A549 (cell line): ENCODE measurements at regions of chr12 and their contacts with region 1.

Region 1: GRCh38 chr12:53267999-53268647 is at the start of gene ESPL1:
- DNase-seq: peak; percentile 82 to 92
- ATAC-seq: peak; percentile 92 to 94
- H3K4me3 ChIP-seq: peak within 1 kb of the TSS; percentile 65
- H3K27ac ChIP-seq: peak within 1 kb of the TSS; percentile 75 to 90
- H3K4me1 ChIP-seq: peaks cover 12% of the 10 kb centered on the region
- CTCF ChIP-seq: peak; percentile 21; the same call in 1 of the 3 replicates
- EP300 ChIP-seq: no peak
- POLR2A ChIP-seq: no peak
- RAD21 ChIP-seq: peak; percentile 41 to 47; a peak in 3 of 5 replicates
- polyA plus RNA-seq, gene ESPL1: 10.0 and 11.8 TPM in 2 replicates

Region 2: GRCh38 chr12:53190108-53190729 is 77.9 kb before region 1 on chr12:
- CTCF ChIA-PET with region 1: no interaction called
- POLR2A ChIA-PET with region 1: no interaction called
- DNase-seq: peak; percentile 73 to 87
- ATAC-seq: peak; percentile 87 to 90
- H3K4me3 ChIP-seq: no peak overlapping the region
- H3K27ac ChIP-seq: peak overlapping the region; percentile 33 to 44; a peak in 3 of 6 replicates
- H3K4me1 ChIP-seq: peaks cover 15% of the 10 kb centered on the region; the same call in 2 of the 3 replicates
- CTCF ChIP-seq: peak; percentile 78
- EP300 ChIP-seq: no peak
- POLR2A ChIP-seq: no peak
- RAD21 ChIP-seq: peak; percentile 65 to 66; a peak in 4 of 5 replicates

Region 3: DNA sequence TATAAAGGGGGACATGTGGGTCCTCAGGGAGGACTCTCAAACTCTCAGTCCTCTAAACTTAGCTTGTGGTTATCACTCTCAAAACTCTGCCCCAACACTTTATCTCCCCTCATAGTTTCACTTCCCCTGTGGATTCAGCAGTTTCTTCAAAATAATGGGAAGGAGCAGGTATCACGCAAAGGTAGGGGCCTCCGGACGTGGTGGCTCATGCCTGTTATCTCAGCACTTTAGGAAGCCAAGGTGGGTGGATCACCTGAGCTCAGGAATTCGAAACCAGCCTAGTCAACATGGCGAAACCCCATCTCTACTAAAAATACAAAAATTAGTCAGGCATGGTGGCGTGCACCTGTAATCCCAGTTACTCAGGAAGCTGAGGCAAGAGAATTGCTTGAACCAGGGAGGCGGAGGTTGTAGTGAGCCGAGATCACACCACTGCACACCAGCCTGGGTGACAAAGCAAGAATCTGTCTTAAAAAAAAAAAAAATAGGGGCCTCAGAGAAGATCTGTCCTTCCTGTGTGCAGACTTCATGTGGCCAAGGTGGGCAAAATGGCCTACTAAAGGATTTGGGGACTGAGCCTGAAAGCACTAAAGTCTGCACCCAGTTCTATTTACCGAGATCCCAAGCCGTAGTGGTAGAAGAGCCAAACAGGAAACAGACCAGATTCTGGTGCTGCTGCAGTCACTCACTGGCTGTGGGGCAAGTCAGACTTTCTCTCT is 67.5 kb before region 1 on chr12:
- CTCF ChIA-PET with region 1: interaction called, 216 read pairs
- POLR2A ChIA-PET with region 1: no interaction called
- DNase-seq: no peak
- ATAC-seq: no peak
- H3K4me3 ChIP-seq: no peak overlapping the region
- H3K27ac ChIP-seq: no peak overlapping the region
- H3K4me1 ChIP-seq: peaks cover 21% of the 10 kb centered on the region
- CTCF ChIP-seq: no peak
- EP300 ChIP-seq: no peak
- POLR2A ChIP-seq: no peak
- RAD21 ChIP-seq: no peak

Region 4: GRCh38 chr12:53251477-53252348 is 16.4 kb before region 1 on chr12:
- CTCF ChIA-PET with region 1: interaction called, 35 read pairs
- POLR2A ChIA-PET with region 1: interaction called, 4 read pairs
- DNase-seq: peak; percentile 83 to 87
- ATAC-seq: peak; percentile 90 to 92
- H3K4me3 ChIP-seq: peak overlapping the region; percentile 90
- H3K27ac ChIP-seq: peak overlapping the region; percentile 91 to 94
- H3K4me1 ChIP-seq: peaks cover 16% of the 10 kb centered on the region
- CTCF ChIP-seq: peak; percentile 47
- EP300 ChIP-seq: no peak
- POLR2A ChIP-seq: peak; percentile 92
- RAD21 ChIP-seq: peak; percentile 64 to 69

Region 5: DNA sequence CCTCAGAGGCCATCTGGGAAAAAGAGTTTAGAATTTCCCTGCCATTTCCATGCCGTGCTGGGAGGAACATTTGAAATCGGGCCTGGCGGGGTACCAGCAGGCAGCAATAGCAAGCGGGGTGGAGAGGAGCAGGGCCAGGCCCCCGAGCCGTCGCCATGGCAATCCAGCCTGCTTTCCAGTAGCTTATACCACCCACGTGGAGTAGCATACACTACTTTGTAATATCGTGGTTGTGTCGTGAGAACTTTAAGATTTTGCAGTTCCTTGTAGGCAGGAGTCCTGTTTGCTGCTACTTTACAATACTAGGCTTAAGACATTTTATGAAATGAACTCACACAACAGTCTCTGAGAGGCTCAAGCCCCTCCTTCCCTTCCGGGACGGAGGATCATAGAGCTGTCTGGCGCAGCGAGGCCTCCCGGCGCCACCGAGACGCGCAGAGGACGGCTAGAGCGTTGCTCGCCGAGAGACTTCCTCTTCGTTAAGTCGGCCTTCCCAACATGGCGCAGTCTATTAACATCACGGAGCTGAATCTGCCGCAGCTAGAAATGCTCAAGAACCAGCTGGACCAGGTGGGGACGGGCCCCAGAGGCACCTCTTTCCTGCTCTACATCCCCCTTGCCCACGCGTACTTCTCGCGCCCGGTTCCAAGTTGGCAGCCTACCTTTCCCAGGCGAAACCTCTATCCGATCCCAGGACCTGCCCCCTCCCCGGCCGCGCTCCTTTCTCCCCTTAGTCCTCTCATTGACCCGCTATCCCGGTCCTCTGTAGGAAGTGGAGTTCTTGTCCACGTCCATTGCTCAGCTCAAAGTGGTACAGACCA is 27.2 kb after region 1 on chr12 and contains the start of gene PFDN5:
- CTCF ChIA-PET with region 1: interaction called, 190 read pairs
- POLR2A ChIA-PET with region 1: interaction called, 10 read pairs
- DNase-seq: peak; percentile 88 to 96
- ATAC-seq: peak; percentile 83 to 88
- H3K4me3 ChIP-seq: peak within 1 kb of the TSS; percentile 75
- H3K27ac ChIP-seq: peak within 1 kb of the TSS; percentile 85 to 92
- H3K4me1 ChIP-seq: peaks cover 34% of the 10 kb centered on the region
- CTCF ChIP-seq: no peak
- EP300 ChIP-seq: no peak
- POLR2A ChIP-seq: peak; percentile 79
- RAD21 ChIP-seq: no peak
- polyA plus RNA-seq, gene PFDN5: 729 and 848 TPM in 2 replicates